ENCODE measurements at regions of chr12 and their contacts with region 1.

Region 1: DNA sequence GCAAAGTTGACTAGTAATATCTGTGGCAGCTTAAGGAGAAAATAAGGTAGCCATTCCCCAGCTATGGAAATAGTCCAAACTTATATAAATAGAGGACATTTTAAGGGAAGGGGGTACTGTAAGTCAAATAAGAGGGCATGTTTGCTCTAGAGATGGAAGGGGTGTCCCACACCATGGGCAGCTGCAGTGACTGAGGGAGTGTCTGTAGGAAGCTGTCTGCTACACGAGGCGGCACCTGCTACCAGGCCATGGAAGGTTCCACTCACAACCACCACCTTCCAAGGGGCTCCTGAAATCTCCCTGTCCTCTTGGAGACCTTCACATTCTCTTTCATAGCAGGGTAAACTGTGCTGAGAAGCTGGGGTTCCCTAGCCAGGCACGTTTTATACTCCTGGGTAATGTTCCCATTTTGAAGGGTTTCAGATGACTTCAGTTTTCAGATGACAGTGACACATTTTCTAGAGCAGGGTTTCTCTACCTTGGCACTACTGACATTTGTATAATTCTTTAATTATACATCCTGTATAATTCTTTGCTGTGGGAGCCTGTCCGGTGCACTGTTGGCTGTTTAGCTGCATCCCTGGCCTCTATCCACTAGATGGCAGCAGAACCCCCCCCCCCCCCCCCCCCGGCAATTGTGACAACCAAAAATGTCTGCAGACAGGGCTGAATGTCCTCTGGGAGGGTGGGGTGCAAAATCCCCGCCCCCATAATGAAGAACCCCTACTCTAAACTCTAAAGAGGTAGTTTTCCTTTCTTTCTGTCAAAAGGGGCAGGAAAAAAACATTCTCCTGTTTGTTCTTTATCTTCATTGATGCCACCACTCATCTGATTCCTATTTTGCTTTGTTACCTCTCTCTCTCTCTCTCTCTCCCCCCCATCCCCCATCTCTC is 11.6 kb upstream of the SMCO2 start:
- DNase-seq: peak; percentile 19
- H3K4me3 Mint-ChIP-seq: no peak overlapping the region
- H3K27ac Mint-ChIP-seq: no peak overlapping the region
- H3K4me1 Mint-ChIP-seq: peaks cover 7% of the 10 kb centered on the region
- H3K27me3 Mint-ChIP-seq: no peaks in the 10 kb centered on the region
- CTCF ChIP-seq: peak; percentile 57

Region 2: GRCh38 chr12:27396216-27396815 is 38.6 kb before region 1 on chr12:
- CTCF ChIA-PET with region 1: no interaction called
- POLR2A ChIA-PET with region 1: no interaction called
- intact Hi-C with region 1: no loop called
- DNase-seq: no peak
- H3K4me3 Mint-ChIP-seq: no peak overlapping the region
- H3K27ac Mint-ChIP-seq: no peak overlapping the region
- H3K4me1 Mint-ChIP-seq: peaks cover 6% of the 10 kb centered on the region
- H3K27me3 Mint-ChIP-seq: no peaks in the 10 kb centered on the region
- CTCF ChIP-seq: no peak

Region 3: DNA sequence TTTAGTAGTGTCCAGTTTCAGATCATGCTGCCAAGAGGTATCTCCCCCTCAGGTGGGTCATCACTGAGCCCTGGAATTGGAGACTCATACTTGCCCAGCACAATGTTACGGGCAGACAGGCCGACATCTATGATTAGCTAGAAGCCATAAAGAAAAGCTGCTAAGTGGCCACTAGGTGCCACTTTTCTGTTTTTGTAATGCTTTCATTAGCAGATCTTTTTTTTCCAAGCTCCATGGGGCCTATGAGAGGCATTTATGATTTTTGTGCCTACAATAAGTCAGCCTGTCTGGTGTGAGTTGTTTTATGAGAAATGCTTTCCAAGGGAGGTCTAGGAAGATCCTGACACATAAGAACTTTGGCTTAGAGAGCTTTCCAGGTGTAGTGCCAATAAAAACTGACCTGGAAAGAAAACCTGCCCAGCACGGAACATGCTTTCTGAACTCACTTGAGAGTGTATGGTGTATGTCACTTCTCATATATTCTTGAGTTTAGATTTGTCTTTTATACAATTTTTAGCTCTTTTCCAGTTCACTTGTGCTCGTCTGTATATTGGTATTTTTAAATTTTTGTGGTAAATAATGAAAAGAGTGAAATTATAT is 10.2 kb before region 1 on chr12:
- CTCF ChIA-PET with region 1: interaction called, 26 read pairs
- POLR2A ChIA-PET with region 1: interaction called, 7 read pairs
- intact Hi-C with region 1: no loop called
- DNase-seq: peak; percentile 54
- H3K4me3 Mint-ChIP-seq: no peak overlapping the region
- H3K27ac Mint-ChIP-seq: no peak overlapping the region
- H3K4me1 Mint-ChIP-seq: no peaks in the 10 kb centered on the region
- H3K27me3 Mint-ChIP-seq: no peaks in the 10 kb centered on the region
- CTCF ChIP-seq: peak; percentile 45

Region 4: DNA sequence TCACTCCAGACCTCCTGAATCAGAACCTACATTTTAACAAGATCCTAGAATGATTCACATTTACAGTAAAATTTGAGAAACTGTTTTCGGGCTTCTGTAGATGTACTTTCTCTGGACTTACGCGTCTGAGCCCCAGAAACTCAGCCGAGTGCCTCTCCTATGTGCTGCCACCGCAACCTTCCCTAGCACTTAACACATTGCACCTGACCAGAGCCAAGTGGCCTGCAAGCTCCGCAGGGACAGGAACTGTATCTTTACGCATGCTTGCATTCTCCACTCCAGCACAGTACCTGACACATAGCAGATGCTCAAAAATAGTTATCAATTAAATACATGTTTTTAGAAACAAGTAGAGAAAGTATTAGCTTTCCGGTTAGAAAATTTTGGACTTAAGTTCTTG is 12.8 kb after region 1 on chr12:
- CTCF ChIA-PET with region 1: interaction called, 26 read pairs
- POLR2A ChIA-PET with region 1: no interaction called
- intact Hi-C with region 1: no loop called
- DNase-seq: no peak
- H3K4me3 Mint-ChIP-seq: no peak overlapping the region
- H3K27ac Mint-ChIP-seq: no peak overlapping the region
- H3K4me1 Mint-ChIP-seq: no peaks in the 10 kb centered on the region
- H3K27me3 Mint-ChIP-seq: no peaks in the 10 kb centered on the region
- CTCF ChIP-seq: no peak

Region 5: DNA sequence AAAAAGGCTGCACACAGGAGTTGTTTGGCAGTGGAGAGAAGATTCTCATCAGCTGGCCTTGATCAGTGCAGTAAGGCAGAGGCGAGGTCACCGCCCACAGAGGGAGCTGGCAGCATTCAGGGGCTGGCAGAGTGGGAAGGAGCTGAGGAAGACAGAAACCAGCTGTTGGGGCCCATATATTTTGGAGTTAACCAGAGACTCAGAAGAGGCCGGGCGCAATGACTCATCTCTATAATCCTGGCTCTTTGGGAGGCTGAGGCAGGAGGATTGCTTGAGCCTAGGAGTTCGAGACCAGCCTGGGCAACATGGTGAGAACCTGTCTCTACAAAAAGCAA is 29.3 kb after region 1 on chr12:
- CTCF ChIA-PET with region 1: interaction called, 10 read pairs
- POLR2A ChIA-PET with region 1: interaction called, 3 read pairs
- intact Hi-C with region 1: no loop called
- DNase-seq: no peak
- H3K4me3 Mint-ChIP-seq: no peak overlapping the region
- H3K27ac Mint-ChIP-seq: no peak overlapping the region
- H3K4me1 Mint-ChIP-seq: peaks cover 6% of the 10 kb centered on the region
- H3K27me3 Mint-ChIP-seq: no peaks in the 10 kb centered on the region
- CTCF ChIP-seq: no peak

Region 6: GRCh38 chr12:27635349-27635972 is 200.5 kb after region 1 on chr12:
- CTCF ChIA-PET with region 1: interaction called, 49 read pairs
- POLR2A ChIA-PET with region 1: interaction called, 3 read pairs
- intact Hi-C with region 1: loop called (anchors 1 kb)
- DNase-seq: peak; percentile 70
- H3K4me3 Mint-ChIP-seq: no peak overlapping the region
- H3K27ac Mint-ChIP-seq: no peak overlapping the region
- H3K4me1 Mint-ChIP-seq: no peaks in the 10 kb centered on the region
- H3K27me3 Mint-ChIP-seq: no peaks in the 10 kb centered on the region
- CTCF ChIP-seq: peak; percentile 64